ENCODE measurements at regions of chr6 and their contacts with region 1.

Region 1: GRCh38 chr6:75418233-75418632 is 75.4 kb downstream of the FILIP1 start:
- DNase-seq: no peak
- ATAC-seq: peak; percentile 70
- H3K4me3 ChIP-seq: no peak overlapping the region
- H3K27ac ChIP-seq: no peak overlapping the region
- H3K4me1 ChIP-seq: peaks cover 5% of the 10 kb centered on the region; the same call in 1 of the 2 replicates
- H3K27me3 ChIP-seq: 0 out of 2 replicates have a peak, but pooled peaks cover 2% of the 10 kb centered on the region
- CTCF ChIP-seq: no peak

Region 2: GRCh38 chr6:74805916-74806696 is 612.1 kb before region 1 on chr6:
- CTCF ChIA-PET with region 1: no interaction called
- POLR2A ChIA-PET with region 1: no interaction called
- in situ Hi-C with region 1: no loop called
- intact Hi-C with region 1: no loop called
- DNase-seq: no peak
- ATAC-seq: no peak
- H3K4me3 ChIP-seq: no peak overlapping the region
- H3K27ac ChIP-seq: no peak overlapping the region
- H3K4me1 ChIP-seq: no peaks in the 10 kb centered on the region
- H3K27me3 ChIP-seq: no peaks in the 10 kb centered on the region
- CTCF ChIP-seq: no peak

Region 3: DNA sequence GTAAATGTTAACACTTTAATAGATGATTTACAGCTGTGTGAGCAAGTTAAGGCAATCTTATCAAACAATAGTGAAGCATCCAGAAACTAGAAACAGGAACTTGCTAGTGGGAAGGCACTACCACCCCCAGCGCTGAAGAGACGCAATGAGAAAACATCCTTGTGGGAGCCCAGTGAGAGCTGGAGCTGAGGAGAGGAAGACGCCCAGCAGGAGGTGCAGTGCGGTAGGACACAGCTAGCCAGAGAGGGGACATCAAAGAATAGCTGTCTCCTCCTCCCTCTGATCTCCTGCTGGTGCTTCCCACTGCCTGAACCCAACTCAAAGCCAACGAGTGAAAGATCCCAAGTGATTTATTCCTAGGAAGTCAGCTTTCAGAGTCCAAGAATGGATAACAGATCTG is 352.7 kb before region 1 on chr6:
- CTCF ChIA-PET with region 1: no interaction called
- POLR2A ChIA-PET with region 1: no interaction called
- in situ Hi-C with region 1: no loop called
- intact Hi-C with region 1: no loop called
- DNase-seq: no peak
- ATAC-seq: no peak
- H3K4me3 ChIP-seq: no peak overlapping the region
- H3K27ac ChIP-seq: no peak overlapping the region
- H3K4me1 ChIP-seq: no peaks in the 10 kb centered on the region
- H3K27me3 ChIP-seq: no peaks in the 10 kb centered on the region
- CTCF ChIP-seq: no peak

Region 4: GRCh38 chr6:75381877-75382633 is 36.2 kb before region 1 on chr6:
- CTCF ChIA-PET with region 1: no interaction called
- POLR2A ChIA-PET with region 1: no interaction called
- in situ Hi-C with region 1: no loop called
- intact Hi-C with region 1: loop called (anchors 5 kb)
- DNase-seq: no peak
- ATAC-seq: no peak
- H3K4me3 ChIP-seq: no peak overlapping the region
- H3K27ac ChIP-seq: no peak overlapping the region
- H3K4me1 ChIP-seq: no peaks in the 10 kb centered on the region
- H3K27me3 ChIP-seq: no peaks in the 10 kb centered on the region; the same call in 1 of the 2 replicates
- CTCF ChIP-seq: no peak

Region 5: GRCh38 chr6:75397656-75398465 is 20.4 kb before region 1 on chr6:
- CTCF ChIA-PET with region 1: no interaction called
- POLR2A ChIA-PET with region 1: no interaction called
- in situ Hi-C with region 1: no loop called
- intact Hi-C with region 1: no loop called
- DNase-seq: no peak
- ATAC-seq: no peak
- H3K4me3 ChIP-seq: no peak overlapping the region
- H3K27ac ChIP-seq: no peak overlapping the region
- H3K4me1 ChIP-seq: no peaks in the 10 kb centered on the region
- H3K27me3 ChIP-seq: peaks cover 3% of the 10 kb centered on the region; the same call in 1 of the 2 replicates
- CTCF ChIP-seq: no peak

Measured in Panc1 (cell line).